Activated CD8-positive, alpha-beta T cell treated with anti-CD3 and anti-CD28 coated beads for 36 hours (primary cell): ENCODE measurements at regions of chr22 and their contacts with region 1.

Region 1: GRCh38 chr22:22959147-22959827 is 71.7 kb downstream of the IGLL5 start:
- DNase-seq: peak; percentile 90
- ATAC-seq: peak; percentile 75
- H3K4me3 Mint-ChIP-seq: no peak overlapping the region
- H3K27ac Mint-ChIP-seq: no peak overlapping the region
- H3K4me1 Mint-ChIP-seq: no peaks in the 10 kb centered on the region
- H3K27me3 Mint-ChIP-seq: peaks cover 12% of the 10 kb centered on the region
- CTCF ChIP-seq: peak; percentile 96

Region 2: GRCh38 chr22:22528780-22529179 is 430.5 kb before region 1 on chr22:
- CTCF ChIA-PET with region 1: no interaction called
- POLR2A ChIA-PET with region 1: no interaction called
- intact Hi-C with region 1: no loop called
- DNase-seq: no peak
- ATAC-seq: no peak
- H3K4me3 Mint-ChIP-seq: no peak overlapping the region
- H3K27ac Mint-ChIP-seq: no peak overlapping the region
- H3K4me1 Mint-ChIP-seq: no peaks in the 10 kb centered on the region
- H3K27me3 Mint-ChIP-seq: no peaks in the 10 kb centered on the region
- CTCF ChIP-seq: no peak

Region 3: GRCh38 chr22:22714600-22715335 is 244.5 kb before region 1 on chr22:
- CTCF ChIA-PET with region 1: no interaction called
- POLR2A ChIA-PET with region 1: no interaction called
- intact Hi-C with region 1: no loop called
- DNase-seq: no peak
- ATAC-seq: no peak
- H3K4me3 Mint-ChIP-seq: no peak overlapping the region
- H3K27ac Mint-ChIP-seq: no peak overlapping the region
- H3K4me1 Mint-ChIP-seq: peaks cover 10% of the 10 kb centered on the region
- H3K27me3 Mint-ChIP-seq: no peaks in the 10 kb centered on the region
- CTCF ChIP-seq: no peak

Region 4: GRCh38 chr22:22770280-22770871 is 188.9 kb before region 1 on chr22:
- CTCF ChIA-PET with region 1: interaction called, 38 read pairs
- POLR2A ChIA-PET with region 1: no interaction called
- intact Hi-C with region 1: no loop called
- DNase-seq: peak; percentile 65
- ATAC-seq: peak; percentile 62
- H3K4me3 Mint-ChIP-seq: no peak overlapping the region
- H3K27ac Mint-ChIP-seq: no peak overlapping the region
- H3K4me1 Mint-ChIP-seq: peaks cover 4% of the 10 kb centered on the region
- H3K27me3 Mint-ChIP-seq: no peaks in the 10 kb centered on the region
- CTCF ChIP-seq: peak; percentile 80

Region 5: GRCh38 chr22:22827187-22827948 is 131.9 kb before region 1 on chr22:
- CTCF ChIA-PET with region 1: interaction called, 16 read pairs
- POLR2A ChIA-PET with region 1: no interaction called
- intact Hi-C with region 1: no loop called
- DNase-seq: no peak
- ATAC-seq: no peak
- H3K4me3 Mint-ChIP-seq: no peak overlapping the region
- H3K27ac Mint-ChIP-seq: no peak overlapping the region
- H3K4me1 Mint-ChIP-seq: peaks cover 30% of the 10 kb centered on the region
- H3K27me3 Mint-ChIP-seq: no peaks in the 10 kb centered on the region
- CTCF ChIP-seq: no peak

Region 6: DNA sequence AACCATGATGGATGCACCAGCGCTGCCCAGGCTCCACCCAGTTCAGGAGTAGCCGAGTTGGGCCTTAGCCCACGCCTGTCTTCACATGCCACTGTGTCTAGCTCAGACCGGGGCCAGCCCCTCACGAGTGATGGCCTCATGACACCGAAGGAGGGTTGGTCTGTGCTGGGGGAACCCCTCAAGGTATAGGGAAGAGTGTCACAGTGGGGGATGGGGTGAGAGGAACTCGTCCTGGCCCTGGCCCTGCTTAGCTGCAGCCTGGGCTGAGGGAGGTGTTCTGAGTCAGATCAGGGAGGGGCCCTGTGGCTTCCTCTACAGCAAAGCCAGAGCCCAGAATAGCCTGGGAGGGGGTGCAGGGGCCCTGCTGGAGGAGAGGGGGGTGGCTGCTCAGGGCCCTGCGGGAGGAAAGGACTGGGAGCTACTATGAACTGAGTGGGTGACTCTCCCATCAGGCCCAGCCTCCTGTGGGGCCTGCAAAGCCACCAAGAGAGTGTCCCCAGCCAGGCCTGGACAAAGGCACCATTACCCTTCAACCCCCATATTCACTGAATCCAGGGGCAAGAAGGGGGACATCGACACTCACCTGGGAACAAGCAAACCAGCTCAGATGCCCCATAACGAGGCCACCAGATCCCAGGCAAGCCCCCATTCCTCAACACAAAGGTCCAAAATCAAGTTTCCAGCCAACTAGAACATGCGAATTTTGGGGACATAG is 30.5 kb before region 1 on chr22:
- CTCF ChIA-PET with region 1: interaction called, 17 read pairs
- POLR2A ChIA-PET with region 1: no interaction called
- intact Hi-C with region 1: no loop called
- DNase-seq: peak; percentile 81
- ATAC-seq: peak; percentile 99
- H3K4me3 Mint-ChIP-seq: no peak overlapping the region
- H3K27ac Mint-ChIP-seq: peak overlapping the region; percentile 25
- H3K4me1 Mint-ChIP-seq: peaks cover 21% of the 10 kb centered on the region
- H3K27me3 Mint-ChIP-seq: no peaks in the 10 kb centered on the region
- CTCF ChIP-seq: no peak

Region 7: DNA sequence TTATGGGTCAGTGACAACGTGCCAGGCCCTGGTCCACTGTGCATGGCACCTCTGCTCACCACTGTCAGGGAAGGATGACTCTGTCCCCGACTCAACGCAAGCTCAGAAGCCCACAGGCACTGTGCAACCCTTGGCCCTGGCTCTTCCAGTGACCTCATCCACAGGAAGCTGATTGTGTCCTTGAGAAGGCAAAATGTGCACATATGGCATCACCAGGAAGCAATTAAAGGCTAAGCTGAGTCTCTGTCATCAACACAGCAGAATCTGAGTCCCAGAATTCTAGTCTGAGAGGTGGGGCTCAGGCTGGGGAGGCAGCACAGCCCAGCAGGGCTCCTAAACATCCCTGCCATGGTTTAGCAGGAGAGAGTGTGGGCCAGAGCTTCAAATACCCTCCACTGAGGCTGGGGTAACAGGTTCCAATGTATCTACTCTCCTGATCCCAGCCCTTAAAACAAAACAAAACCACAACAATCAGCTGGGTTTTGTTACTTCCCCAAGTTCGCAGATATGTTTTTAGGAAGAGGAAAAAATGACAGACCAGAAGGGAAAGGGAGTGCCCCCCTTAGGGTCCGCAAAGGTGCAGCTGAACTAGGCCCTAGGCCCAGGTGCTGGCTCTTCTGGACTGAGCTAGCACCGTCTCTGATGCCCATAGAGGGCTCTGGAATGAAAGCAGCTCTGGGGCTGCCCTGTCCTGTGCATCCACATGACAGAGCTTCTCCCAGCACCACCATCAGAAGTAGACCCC is 77.6 kb after region 1 on chr22:
- CTCF ChIA-PET with region 1: interaction called, 17 read pairs
- POLR2A ChIA-PET with region 1: no interaction called
- intact Hi-C with region 1: no loop called
- DNase-seq: peak; percentile 23
- ATAC-seq: peak; percentile 67
- H3K4me3 Mint-ChIP-seq: no peak overlapping the region
- H3K27ac Mint-ChIP-seq: peak overlapping the region; percentile 27
- H3K4me1 Mint-ChIP-seq: peaks cover 10% of the 10 kb centered on the region
- H3K27me3 Mint-ChIP-seq: peaks cover 6% of the 10 kb centered on the region
- CTCF ChIP-seq: no peak

Region 8: GRCh38 chr22:23137905-23138561 is 178.7 kb after region 1 on chr22:
- CTCF ChIA-PET with region 1: interaction called, 274 read pairs
- POLR2A ChIA-PET with region 1: no interaction called
- intact Hi-C with region 1: no loop called
- DNase-seq: peak; percentile 67
- ATAC-seq: peak; percentile 37
- H3K4me3 Mint-ChIP-seq: peak overlapping the region; percentile 11
- H3K27ac Mint-ChIP-seq: peak overlapping the region; percentile 90
- H3K4me1 Mint-ChIP-seq: peaks cover 62% of the 10 kb centered on the region
- H3K27me3 Mint-ChIP-seq: no peaks in the 10 kb centered on the region
- CTCF ChIP-seq: no peak

Region 9: DNA sequence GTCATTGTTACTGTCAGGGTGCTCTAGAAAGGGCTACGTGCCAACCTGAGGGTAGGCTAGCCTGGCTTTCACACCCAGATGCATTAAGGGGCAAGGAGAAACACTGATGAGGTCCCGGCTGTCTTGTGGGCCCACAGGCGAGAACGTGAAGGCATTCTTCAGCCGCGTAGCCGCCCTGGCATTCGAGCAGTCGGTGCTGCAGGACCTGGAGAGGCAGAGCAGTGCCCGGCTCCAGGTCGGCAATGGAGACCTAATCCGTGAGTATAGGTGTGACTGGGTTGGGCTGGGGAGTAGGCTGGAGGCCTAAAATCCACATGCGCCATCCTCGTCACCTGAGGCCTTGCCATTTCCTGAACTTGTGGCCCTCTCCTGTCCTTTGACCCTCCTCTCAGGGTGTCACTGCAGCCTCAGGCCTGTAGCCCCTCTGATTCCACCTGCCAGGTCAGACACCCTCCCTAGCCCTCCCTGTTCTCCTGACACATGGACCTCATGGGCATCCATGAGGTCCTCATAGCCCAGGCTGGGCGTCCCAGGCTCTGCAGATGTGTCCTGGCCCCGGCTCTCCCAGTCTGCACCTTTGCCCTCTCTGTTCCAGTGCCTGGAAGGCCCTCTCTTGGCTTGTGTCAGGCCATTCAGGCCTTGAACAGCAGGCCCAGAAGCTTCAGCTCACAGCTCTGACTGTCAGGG is 201.6 kb after region 1 on chr22:
- CTCF ChIA-PET with region 1: no interaction called
- POLR2A ChIA-PET with region 1: no interaction called
- intact Hi-C with region 1: no loop called
- DNase-seq: no peak
- ATAC-seq: no peak
- H3K4me3 Mint-ChIP-seq: no peak overlapping the region
- H3K27ac Mint-ChIP-seq: no peak overlapping the region
- H3K4me1 Mint-ChIP-seq: no peaks in the 10 kb centered on the region
- H3K27me3 Mint-ChIP-seq: no peaks in the 10 kb centered on the region
- CTCF ChIP-seq: no peak